Transverse colon (tissue), 4 donors: ENCODE measurements at regions of chr4 and their contacts with region 1.

Region 1: DNA sequence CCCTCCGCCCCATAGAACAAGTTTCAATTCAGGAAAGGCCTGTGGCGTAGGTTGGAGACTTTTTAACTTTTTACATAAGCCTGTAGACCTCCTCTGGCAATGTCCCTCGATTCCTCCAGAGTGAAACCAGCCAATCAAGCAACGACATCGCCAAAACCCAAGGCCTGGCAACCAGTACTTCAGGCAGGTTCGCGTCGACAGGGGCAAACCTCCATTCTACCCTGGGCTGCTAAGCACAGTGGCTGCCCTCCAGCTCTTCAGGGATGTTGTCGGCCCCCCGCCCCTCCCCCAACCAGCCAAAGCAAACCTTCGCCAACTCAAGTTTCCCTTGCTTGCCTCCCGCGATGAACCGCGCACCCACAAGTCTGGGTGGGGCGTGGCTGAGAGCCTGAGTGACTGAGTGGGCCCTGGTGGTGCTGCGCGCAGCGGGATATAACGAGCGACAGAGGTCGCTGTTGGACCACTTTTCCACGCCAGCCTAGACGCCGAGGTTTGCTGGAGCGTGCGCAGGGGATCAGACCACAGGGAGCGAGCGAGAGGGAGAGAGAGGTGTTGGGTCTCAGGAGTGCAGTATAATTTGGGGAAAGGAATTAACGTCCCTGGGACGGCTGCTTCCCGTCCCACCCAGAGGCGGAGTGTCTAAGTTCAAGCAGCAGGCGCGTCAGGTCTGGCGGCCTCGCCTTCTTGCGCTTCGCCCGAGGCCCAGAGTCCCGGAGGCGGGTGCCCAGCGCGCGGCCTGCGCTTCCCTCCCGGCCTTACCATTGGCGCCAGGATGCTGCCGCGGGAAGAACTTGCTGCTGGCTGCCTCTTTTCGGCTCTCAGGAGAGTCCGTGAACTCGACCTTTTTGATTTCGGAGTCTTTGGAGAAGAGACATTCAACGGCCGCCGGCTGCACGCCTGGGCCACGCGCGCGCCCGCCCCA is 9.0 kb upstream of the PITX2 start:
- DNase-seq: peak; percentile 70
- H3K4me3 ChIP-seq: peak overlapping the region in 2 of 4 donors; percentile 6 to 38
- H3K27ac ChIP-seq: no peak overlapping the region
- H3K4me1 ChIP-seq: peaks cover 0 to 33% (median 23%) of the 10 kb centered on the region in 4 donors
- H3K27me3 ChIP-seq: peaks cover 100% of the 10 kb centered on the region
- CTCF ChIP-seq: peak; percentile 54 to 93 (median 69)
- EP300 ChIP-seq: no peak
- POLR2A ChIP-seq: no peak

Region 2: DNA sequence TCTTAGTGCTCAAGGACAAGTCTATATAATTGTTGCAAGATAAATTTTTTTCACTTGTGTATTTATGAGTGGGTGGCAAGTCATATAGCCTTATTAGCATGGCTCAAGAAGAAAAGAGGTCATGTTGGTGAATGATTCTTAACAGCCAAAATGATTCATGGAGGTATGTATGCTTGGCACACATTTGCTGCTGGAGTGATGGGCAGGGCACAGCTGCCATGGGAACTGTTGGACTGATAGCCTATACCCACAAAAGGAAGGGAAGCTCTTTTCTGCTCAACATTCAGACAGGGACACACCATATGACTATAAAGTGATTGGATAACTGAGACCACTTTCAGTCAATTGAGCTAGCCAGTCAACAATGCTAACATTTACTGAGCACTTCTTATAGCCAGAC is 37.8 kb after region 1 on chr4:
- in situ Hi-C with region 1: no loop called
- intact Hi-C with region 1: no loop called
- DNase-seq: peak; percentile 28
- H3K4me3 ChIP-seq: no peak overlapping the region
- H3K27ac ChIP-seq: no peak overlapping the region
- H3K4me1 ChIP-seq: peaks cover 0 to 15% (median 3%) of the 10 kb centered on the region in 4 donors
- H3K27me3 ChIP-seq: no peaks in the 10 kb centered on the region
- CTCF ChIP-seq: no peak
- EP300 ChIP-seq: no peak
- POLR2A ChIP-seq: no peak

Region 3: GRCh38 chr4:110970642-110971041 is 338.8 kb after region 1 on chr4:
- in situ Hi-C with region 1: loop called in 2 of 4 experiments (anchors 25 kb)
- intact Hi-C with region 1: no loop called
- DNase-seq: peak; percentile 68
- H3K4me3 ChIP-seq: no peak overlapping the region
- H3K27ac ChIP-seq: no peak overlapping the region
- H3K4me1 ChIP-seq: no peaks in the 10 kb centered on the region
- H3K27me3 ChIP-seq: peaks cover 4% of the 10 kb centered on the region
- CTCF ChIP-seq: peak; percentile 23 to 54 (median 45)
- EP300 ChIP-seq: no peak
- POLR2A ChIP-seq: no peak

Region 4: GRCh38 chr4:111283061-111283677 is 651.3 kb after region 1 on chr4:
- in situ Hi-C with region 1: loop called in 1 of 4 experiments (anchors 25 kb)
- intact Hi-C with region 1: no loop called
- DNase-seq: peak; percentile 70
- H3K4me3 ChIP-seq: no peak overlapping the region
- H3K27ac ChIP-seq: no peak overlapping the region
- H3K4me1 ChIP-seq: peaks cover 0 to 3% (median 0%) of the 10 kb centered on the region in 4 donors
- H3K27me3 ChIP-seq: peaks cover 5% of the 10 kb centered on the region
- CTCF ChIP-seq: peak; percentile 66 to 78 (median 71)
- EP300 ChIP-seq: no peak
- POLR2A ChIP-seq: no peak